B cell (primary cell): ENCODE measurements at regions of chr14 and their contacts with region 1.

Region 1: DNA sequence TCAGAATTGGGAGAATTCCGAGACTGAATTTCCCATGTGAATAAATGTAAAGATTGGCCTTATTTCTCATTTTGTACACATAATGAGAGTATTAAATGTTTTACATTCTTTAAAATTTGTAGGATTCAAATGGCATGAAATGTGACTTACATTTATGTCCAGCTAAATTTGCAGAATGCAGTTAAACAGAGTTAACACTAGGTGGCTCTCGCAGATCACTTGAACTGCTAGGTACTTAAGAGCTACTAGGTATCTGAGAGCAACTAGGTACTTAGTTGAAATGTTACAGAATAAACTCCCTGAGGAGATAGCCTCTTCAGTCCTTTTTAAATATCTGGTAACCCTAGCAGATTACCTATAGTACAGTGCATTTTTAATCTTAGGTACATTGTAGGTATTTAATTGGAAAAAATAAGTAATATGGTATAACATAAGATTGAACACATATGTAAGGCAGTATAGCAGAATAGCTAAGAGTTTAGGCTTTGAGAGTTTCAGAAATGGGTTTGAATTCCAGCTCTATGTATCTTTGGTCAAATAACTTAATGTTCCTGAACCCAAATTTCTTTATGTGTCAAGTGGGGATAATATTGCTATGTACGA is 73.8 kb downstream of the KIAA0586 start:
- DNase-seq: peak; percentile 64
- ATAC-seq: peak; percentile 63
- H3K4me3 ChIP-seq: no peak overlapping the region
- H3K4me3 Mint-ChIP-seq: no peak overlapping the region
- H3K27ac ChIP-seq: no peak overlapping the region
- H3K27ac Mint-ChIP-seq: no peak overlapping the region
- H3K4me1 ChIP-seq: no peaks in the 10 kb centered on the region
- H3K4me1 Mint-ChIP-seq: no peaks in the 10 kb centered on the region
- H3K27me3 ChIP-seq: no peaks in the 10 kb centered on the region
- H3K27me3 Mint-ChIP-seq: no peaks in the 10 kb centered on the region
- CTCF ChIP-seq: peak; percentile 94

Region 2: DNA sequence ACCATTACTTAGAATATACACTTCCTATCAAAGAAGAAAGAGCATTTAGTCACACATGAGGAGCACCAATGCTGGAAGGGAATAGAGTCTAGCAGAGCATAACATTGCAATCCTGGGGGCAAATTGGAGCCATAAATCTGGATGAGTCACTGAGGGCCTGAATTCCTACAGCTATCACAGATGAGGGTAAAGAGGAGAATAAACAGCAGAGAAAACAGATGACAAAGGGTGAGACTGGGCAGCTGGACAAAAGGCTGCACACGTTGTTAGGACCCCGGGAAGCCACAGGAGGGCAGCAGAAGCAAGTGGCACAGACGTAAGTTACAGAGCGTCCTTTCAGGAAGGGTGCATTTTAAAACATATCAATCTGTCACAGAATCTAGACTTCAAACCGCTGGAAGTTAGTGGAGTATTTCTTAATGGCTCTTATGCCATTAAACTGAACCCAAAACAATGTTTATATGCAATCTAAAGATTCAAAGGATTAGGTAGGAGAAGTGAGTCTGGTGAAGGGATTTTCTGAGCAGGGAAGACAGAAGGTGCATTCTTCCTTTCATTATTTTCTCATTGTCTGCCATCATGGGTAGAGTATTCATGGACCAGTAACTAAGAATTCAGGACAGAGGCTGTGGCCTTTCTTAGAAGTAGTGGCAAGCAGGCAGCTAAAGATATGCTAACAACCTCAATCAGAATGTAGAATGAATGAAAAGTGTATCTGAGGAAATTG is 527.3 kb after region 1 on chr14:
- CTCF ChIA-PET with region 1: interaction called, 8 read pairs
- POLR2A ChIA-PET with region 1: no interaction called
- intact Hi-C with region 1: loop called (anchors 10 kb)
- DNase-seq: peak; percentile 41
- ATAC-seq: peak; percentile 45
- H3K4me3 ChIP-seq: no peak overlapping the region
- H3K4me3 Mint-ChIP-seq: no peak overlapping the region
- H3K27ac ChIP-seq: no peak overlapping the region
- H3K27ac Mint-ChIP-seq: no peak overlapping the region
- H3K4me1 ChIP-seq: no peaks in the 10 kb centered on the region
- H3K4me1 Mint-ChIP-seq: peaks cover 4% of the 10 kb centered on the region
- H3K27me3 ChIP-seq: no peaks in the 10 kb centered on the region
- H3K27me3 Mint-ChIP-seq: peaks cover 24% of the 10 kb centered on the region
- CTCF ChIP-seq: peak; percentile 54

Region 3: GRCh38 chr14:59055439-59056045 is 554.2 kb after region 1 on chr14:
- CTCF ChIA-PET with region 1: interaction called, 20 read pairs
- POLR2A ChIA-PET with region 1: no interaction called
- intact Hi-C with region 1: no loop called
- DNase-seq: peak; percentile 34
- ATAC-seq: no peak
- H3K4me3 ChIP-seq: no peak overlapping the region
- H3K4me3 Mint-ChIP-seq: no peak overlapping the region
- H3K27ac ChIP-seq: no peak overlapping the region
- H3K27ac Mint-ChIP-seq: no peak overlapping the region
- H3K4me1 ChIP-seq: no peaks in the 10 kb centered on the region
- H3K4me1 Mint-ChIP-seq: no peaks in the 10 kb centered on the region
- H3K27me3 ChIP-seq: no peaks in the 10 kb centered on the region
- H3K27me3 Mint-ChIP-seq: peaks cover 13% of the 10 kb centered on the region
- CTCF ChIP-seq: peak; percentile 57

Region 4: DNA sequence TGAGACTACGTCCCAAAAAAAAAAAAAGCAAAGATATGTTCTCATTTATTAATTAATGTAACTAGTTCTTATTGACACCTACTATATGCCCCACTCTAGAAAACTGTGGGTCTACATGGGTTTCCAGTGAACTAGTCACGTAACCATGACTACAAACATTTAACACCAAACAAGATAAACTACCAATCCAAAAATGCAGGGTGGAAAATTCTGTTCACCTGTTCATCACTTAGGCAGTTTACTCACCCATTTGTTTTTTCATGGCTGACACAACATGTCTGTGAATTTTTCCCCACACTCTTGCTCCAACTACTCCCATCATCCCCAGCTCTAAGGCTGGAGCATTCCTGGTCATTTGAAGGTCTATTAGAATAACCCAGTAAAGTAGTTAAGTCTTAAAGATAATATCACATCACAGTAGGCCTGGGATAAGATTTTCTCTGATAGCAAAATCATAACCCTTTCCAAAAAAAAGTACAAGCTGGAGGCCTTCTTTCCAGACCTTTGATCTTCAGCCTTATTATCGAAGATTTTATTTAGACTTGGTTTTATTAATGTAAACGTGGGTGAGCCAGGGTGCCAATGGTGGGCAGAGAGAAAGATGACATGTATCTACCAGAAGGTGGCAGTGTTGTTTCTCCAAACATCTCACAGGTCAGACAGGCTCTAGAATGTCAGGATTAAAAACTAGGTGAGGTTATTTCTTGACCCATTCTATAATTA is 625.6 kb after region 1 on chr14:
- CTCF ChIA-PET with region 1: interaction called, 26 read pairs
- POLR2A ChIA-PET with region 1: no interaction called
- intact Hi-C with region 1: loop called (anchors 5 kb)
- DNase-seq: peak; percentile 73
- ATAC-seq: peak; percentile 80
- H3K4me3 ChIP-seq: no peak overlapping the region
- H3K4me3 Mint-ChIP-seq: no peak overlapping the region
- H3K27ac ChIP-seq: no peak overlapping the region
- H3K27ac Mint-ChIP-seq: no peak overlapping the region
- H3K4me1 ChIP-seq: no peaks in the 10 kb centered on the region
- H3K4me1 Mint-ChIP-seq: peaks cover 3% of the 10 kb centered on the region
- H3K27me3 ChIP-seq: peaks cover 0 to 4% (median 1%) of the 10 kb centered on the region in 4 experiments
- H3K27me3 Mint-ChIP-seq: peaks cover 8% of the 10 kb centered on the region
- CTCF ChIP-seq: peak; percentile 94